Gastrocnemius medialis (tissue), 4 donors: ENCODE measurements at regions of chr4 and their contacts with region 1.

Region 1: GRCh38 chr4:473570-474457 is 25.1 kb downstream of the ZNF721 start:
- DNase-seq: peak; percentile 95 to 96
- ATAC-seq: peak; percentile 100
- H3K4me3 ChIP-seq: peak overlapping the region; percentile 80 to 98 (median 93)
- H3K27ac ChIP-seq: peak overlapping the region; percentile 83 to 95 (median 92)
- H3K4me1 ChIP-seq: peaks cover 0 to 12% of the 10 kb centered on the region in 2 donors
- H3K27me3 ChIP-seq: no peaks in the 10 kb centered on the region
- CTCF ChIP-seq: no peak
- POLR2A ChIP-seq: peak; percentile 62 to 74

Region 2: DNA sequence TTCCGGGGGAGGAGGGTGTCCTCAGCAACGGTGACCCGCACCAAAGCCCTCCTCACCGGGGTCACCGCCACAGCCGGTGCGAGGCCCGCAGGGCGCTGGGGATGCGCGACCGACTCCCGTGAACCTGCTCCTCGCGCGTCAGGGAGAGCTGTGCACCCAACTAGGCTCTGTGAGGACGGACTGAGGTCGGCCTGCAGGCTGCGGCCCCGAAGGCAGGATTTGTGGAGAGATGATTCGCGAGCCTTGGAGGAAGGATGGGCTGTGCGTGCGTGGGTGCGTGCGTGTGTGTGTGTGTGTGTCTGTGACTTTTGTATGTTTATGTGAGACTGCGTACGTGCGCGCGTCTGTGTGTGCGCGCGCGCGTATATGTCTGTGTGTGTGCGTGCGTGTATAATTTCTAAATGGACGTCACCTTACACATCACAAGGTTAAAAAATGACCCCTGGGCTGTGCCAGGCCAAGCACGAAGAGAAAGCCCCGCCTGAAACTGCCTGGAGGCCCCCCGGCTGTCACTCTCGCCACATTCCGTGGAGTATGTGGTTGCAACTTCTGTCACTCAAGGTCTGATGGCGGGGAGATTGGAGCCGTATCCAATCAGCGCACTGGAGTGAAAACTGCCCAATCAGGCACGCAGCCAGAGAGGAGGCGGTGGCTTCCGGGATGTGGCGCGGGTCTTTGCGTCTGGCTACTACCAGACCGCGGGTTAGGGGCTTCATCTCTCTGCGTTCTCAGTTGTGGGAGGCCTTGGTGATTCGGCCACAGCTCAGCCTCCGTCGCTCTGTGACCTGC is 136.5 kb before region 1 on chr4 and contains the start of gene ZNF141:
- in situ Hi-C with region 1: no loop called
- intact Hi-C with region 1: loop called (anchors 2 kb)
- DNase-seq: peak; percentile 94
- ATAC-seq: peak; percentile 98 to 99
- H3K4me3 ChIP-seq: peak within 1 kb of the TSS; percentile 88 to 99 (median 94)
- H3K27ac ChIP-seq: peak within 1 kb of the TSS; percentile 82 to 93 (median 90)
- H3K4me1 ChIP-seq: peaks cover 5 to 9% of the 10 kb centered on the region in 2 donors
- H3K27me3 ChIP-seq: no peaks in the 10 kb centered on the region
- CTCF ChIP-seq: no peak
- POLR2A ChIP-seq: peak; percentile 69 to 80
- total RNA-seq, gene ZNF141: 1.4 to 5.7 (median 2.0) TPM